Left colon (tissue), 2 donors: ENCODE measurements at regions of chr12 and their contacts with region 1.

Region 1: GRCh38 chr12:57175428-57176138 is 28.2 kb upstream of the LRP1-AS start:
- DNase-seq: peak; percentile 71 to 82
- ATAC-seq: peak; percentile 74

Region 2: GRCh38 chr12:57069523-57069922 is 106.1 kb before region 1 on chr12:
- intact Hi-C with region 1: loop called in 1 of 2 experiments (anchors 5 kb)
- DNase-seq: peak in 1 of 2 donors; percentile 58
- ATAC-seq: peak; percentile 97

Region 3: DNA sequence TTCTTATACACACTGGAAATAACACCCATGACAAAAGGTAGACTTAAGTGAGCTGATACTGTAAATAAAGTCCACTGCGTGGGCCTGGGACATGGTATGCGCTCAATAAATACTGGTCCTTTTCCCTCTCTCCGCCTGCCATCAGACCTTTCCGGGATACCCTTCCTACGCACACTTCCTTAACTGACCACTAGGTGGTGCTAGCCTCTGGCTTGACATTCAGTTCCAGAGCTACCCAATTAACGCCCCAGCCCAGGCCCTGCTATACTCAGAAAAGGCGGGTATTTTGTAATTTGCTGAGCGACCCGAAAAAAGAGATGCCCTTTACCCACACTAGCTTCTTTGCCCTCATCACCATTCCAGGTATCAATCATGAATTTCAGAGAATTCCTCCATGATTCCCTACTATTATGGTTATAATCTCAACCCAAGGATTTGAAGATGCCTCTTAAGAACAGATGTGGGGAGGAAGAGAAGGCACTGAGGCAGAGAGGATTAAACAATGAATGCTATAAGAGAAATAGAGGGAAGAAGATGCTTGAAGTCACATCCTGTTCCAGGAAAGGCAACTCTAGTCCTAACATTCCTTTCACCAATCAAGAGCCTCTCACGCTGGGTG is 51.2 kb before region 1 on chr12:
- intact Hi-C with region 1: loop called in 1 of 2 experiments (anchors 2 kb)
- DNase-seq: peak; percentile 61 to 80
- ATAC-seq: peak; percentile 14